CD8-positive, alpha-beta memory T cell (primary cell): ENCODE measurements at regions of chr17 and their contacts with region 1.

Region 1: DNA sequence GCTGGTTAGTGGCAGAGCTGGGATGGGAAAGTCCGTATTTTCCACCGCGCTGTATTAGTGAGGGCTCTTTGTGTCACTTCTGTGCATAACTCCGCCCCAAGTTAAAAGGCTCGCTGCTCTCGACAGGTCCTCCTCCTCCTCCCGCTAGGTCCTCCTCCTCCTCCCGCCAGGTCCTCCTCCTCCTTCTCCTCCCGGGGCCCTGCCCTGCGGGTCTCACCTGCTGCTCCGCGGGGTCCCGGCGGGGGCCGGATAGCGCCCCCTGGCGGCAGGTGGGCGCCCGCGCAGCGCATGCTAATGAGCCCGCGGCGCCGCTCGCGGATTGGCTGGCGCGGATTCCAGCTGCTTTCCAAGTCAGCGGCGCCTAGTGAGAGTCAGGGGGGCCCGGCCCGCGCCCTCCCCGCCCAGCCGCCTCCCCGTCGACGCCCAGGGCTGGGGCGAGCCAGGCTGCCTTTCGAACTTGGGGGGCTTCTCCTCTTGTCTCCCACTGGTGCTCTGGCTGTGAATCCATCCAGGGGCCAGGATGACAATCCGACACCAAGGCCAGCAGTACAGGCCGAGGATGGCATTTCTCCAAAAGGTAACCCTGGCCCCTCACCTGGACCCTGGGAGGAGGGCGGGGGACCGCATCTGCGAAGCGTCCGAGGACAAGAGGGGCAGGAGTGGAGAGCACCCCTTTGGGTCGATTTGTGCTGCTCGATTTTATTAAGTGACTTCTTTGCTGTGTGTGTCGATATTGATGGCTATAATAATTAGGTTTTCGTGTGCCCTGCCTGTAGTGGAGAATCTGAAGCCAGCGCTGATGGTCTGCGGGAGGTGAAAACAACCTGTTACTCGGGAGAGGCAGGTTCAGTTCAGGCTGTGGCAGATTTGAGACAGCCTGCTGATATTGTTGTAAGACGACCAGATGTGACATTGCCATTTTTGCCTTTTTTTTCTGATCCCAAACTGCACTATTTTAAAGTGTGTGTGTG is at the start of gene RGS9:
- DNase-seq: peak; percentile 84 to 91 (median 87)
- H3K4me3 ChIP-seq: peak within 1 kb of the TSS; percentile 67
- H3K4me3 Mint-ChIP-seq: peak within 1 kb of the TSS; percentile 73 to 90 (median 88)
- H3K27ac ChIP-seq: no peak within 1 kb of the TSS
- H3K27ac Mint-ChIP-seq: peak within 1 kb of the TSS; percentile 68 to 92 (median 84)
- H3K4me1 ChIP-seq: peaks cover 30% of the 10 kb centered on the region
- H3K4me1 Mint-ChIP-seq: peaks cover 38 to 44% (median 41%) of the 10 kb centered on the region in 3 donors
- H3K27me3 ChIP-seq: no peaks in the 10 kb centered on the region
- H3K27me3 Mint-ChIP-seq: peaks cover 1 to 18% of the 10 kb centered on the region in 2 donors
- total RNA-seq, gene RGS9: 1.4 to 2.6 TPM

Region 2: GRCh38 chr17:65074778-65075250 is 62.5 kb before region 1 on chr17:
- CTCF ChIA-PET with region 1: no interaction called
- POLR2A ChIA-PET with region 1: no interaction called
- DNase-seq: no peak
- H3K4me3 ChIP-seq: no peak overlapping the region
- H3K4me3 Mint-ChIP-seq: no peak overlapping the region
- H3K27ac ChIP-seq: no peak overlapping the region
- H3K27ac Mint-ChIP-seq: peak overlapping the region in 1 of 8 donors; percentile 29
- H3K4me1 ChIP-seq: no peaks in the 10 kb centered on the region
- H3K4me1 Mint-ChIP-seq: no peaks in the 10 kb centered on the region
- H3K27me3 ChIP-seq: no peaks in the 10 kb centered on the region
- H3K27me3 Mint-ChIP-seq: peaks cover 0 to 1% of the 10 kb centered on the region in 2 donors

Region 3: DNA sequence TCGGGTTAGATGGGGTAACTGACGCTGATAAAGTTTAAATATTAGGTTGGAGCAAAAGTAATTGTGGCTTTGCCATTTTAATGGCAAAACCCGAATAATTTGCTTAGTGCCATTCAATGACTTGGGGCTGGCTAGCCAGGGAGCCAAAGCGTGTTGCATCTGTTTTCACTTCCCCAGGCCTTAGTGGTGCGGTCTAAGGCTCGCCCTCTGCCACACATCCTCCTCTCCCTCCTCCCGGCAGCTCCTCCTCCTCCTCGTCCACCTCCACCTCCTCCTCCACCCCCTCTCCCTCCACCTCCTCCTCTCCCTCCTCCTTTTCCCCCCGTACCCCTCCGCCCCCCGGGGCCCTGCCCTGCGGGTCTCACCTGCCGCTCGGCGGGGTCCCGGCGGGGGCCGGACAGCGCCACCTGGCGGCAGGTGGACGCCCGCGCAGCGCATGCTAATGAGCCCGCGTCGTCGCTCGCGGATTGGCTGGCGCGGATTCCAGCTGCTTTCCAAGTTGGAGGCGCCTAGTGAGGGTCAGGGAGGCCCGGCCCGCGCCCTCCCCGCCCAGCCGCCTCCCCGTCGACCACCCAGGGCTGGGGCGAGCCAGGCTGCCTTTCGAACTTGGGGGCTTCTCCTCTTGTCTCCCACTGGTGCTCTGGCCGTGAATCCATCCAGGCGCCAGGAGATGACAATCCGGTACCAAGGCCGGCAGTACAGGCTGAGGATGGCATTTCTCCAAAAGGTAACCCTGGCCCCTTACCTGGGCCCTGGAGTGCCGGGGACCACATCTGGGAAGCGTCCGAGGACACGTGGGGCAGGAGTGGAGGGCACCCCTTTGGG is 36.8 kb before region 1 on chr17:
- CTCF ChIA-PET with region 1: interaction called, 23 read pairs
- POLR2A ChIA-PET with region 1: no interaction called
- DNase-seq: peak; percentile 79 to 88 (median 82)
- H3K4me3 ChIP-seq: peak overlapping the region; percentile 95
- H3K4me3 Mint-ChIP-seq: peak overlapping the region; percentile 87 to 92 (median 90)
- H3K27ac ChIP-seq: peak overlapping the region; percentile 70
- H3K27ac Mint-ChIP-seq: peak overlapping the region; percentile 75 to 96 (median 90)
- H3K4me1 ChIP-seq: peaks cover 11% of the 10 kb centered on the region
- H3K4me1 Mint-ChIP-seq: peaks cover 16 to 30% (median 21%) of the 10 kb centered on the region in 3 donors
- H3K27me3 ChIP-seq: no peaks in the 10 kb centered on the region
- H3K27me3 Mint-ChIP-seq: peaks cover 0 to under 1% of the 10 kb centered on the region in 2 donors

Region 4: GRCh38 chr17:65122836-65123756 is 14.2 kb before region 1 on chr17:
- CTCF ChIA-PET with region 1: interaction called, 14 read pairs
- POLR2A ChIA-PET with region 1: interaction called, 3 read pairs
- DNase-seq: peak; percentile 69 to 88 (median 83)
- H3K4me3 ChIP-seq: peak overlapping the region; percentile 68
- H3K4me3 Mint-ChIP-seq: peak overlapping the region; percentile 59 to 96 (median 92)
- H3K27ac ChIP-seq: peak overlapping the region; percentile 64
- H3K27ac Mint-ChIP-seq: peak overlapping the region; percentile 56 to 99 (median 98)
- H3K4me1 ChIP-seq: peaks cover 10% of the 10 kb centered on the region
- H3K4me1 Mint-ChIP-seq: peaks cover 21 to 34% (median 25%) of the 10 kb centered on the region in 3 donors
- H3K27me3 ChIP-seq: no peaks in the 10 kb centered on the region
- H3K27me3 Mint-ChIP-seq: peaks cover 0 to 13% of the 10 kb centered on the region in 2 donors

Region 5: DNA sequence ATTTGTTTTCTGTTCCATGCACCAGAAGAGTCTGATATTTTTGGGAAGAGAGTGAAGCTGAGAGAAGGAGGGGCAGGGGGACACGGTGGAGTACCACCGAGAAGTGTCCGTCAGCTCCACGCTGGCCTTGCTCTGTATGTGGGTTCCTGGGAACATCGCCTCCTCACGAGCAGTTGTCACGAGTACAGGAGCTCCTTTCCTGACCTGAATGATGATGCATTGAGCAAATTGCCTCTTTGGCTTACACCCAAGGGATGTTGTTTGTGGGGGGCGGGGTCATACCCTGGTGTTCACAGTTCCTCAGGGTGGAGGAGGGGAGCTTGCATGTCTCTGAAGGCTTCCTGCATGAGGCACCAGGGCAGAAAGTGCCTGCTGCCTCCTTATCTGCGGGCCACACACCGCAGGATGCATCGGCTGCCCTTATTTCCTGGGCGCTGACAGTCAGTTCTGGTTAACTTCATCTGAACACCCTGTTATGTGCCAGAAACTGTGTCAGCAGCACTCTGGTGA is 36.0 kb after region 1 on chr17:
- CTCF ChIA-PET with region 1: interaction called, 11 read pairs
- POLR2A ChIA-PET with region 1: no interaction called
- DNase-seq: peak; percentile 48 to 87 (median 66)
- H3K4me3 ChIP-seq: no peak overlapping the region
- H3K4me3 Mint-ChIP-seq: peak overlapping the region in 1 of 7 donors; percentile 42
- H3K27ac ChIP-seq: peak overlapping the region; percentile 13
- H3K27ac Mint-ChIP-seq: peak overlapping the region in 1 of 8 donors; percentile 3
- H3K4me1 ChIP-seq: peaks cover 45% of the 10 kb centered on the region
- H3K4me1 Mint-ChIP-seq: peaks cover 0 to 32% (median 10%) of the 10 kb centered on the region in 3 donors
- H3K27me3 ChIP-seq: no peaks in the 10 kb centered on the region
- H3K27me3 Mint-ChIP-seq: no peaks in the 10 kb centered on the region

Region 6: DNA sequence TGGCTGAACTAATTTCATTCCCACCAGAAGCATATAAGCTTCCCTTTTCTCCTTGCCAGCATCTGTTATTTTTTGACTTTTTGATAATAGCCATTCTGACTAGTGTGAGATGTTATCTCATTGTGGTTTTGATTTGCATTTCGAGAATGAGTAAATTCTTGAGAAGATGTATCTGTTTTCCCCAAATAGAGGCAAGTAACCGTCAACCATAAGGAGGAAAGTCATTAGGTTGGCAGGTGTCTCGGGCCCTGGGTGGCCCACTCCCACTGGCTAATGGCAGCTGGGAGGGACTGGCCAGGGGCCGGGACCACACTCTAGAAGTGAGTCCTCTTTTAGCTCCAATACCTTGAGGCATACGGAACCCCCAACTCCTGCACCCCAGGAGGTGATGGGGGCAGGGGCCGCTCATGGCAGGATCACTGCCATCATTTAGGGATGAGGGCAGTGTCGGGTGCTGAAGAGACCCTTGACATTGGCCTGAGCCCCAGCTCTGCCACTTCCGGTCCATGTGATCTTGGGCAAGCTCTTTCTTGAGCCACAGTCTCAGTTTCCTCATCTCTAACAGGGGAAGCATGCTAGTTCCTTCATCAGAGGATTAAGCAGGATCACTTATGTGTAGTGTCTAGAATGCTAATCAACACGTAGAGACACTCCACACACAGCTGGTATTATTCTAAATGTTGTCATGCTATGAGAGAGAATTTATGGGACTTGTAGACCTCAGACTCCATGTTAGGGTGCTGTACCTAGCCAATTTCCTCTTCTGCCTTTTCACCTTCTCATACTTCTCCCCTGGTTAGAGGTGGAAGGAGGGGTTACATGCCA is 44.1 kb after region 1 on chr17:
- CTCF ChIA-PET with region 1: interaction called, 23 read pairs
- POLR2A ChIA-PET with region 1: interaction called, 4 read pairs
- DNase-seq: no peak
- H3K4me3 ChIP-seq: no peak overlapping the region
- H3K4me3 Mint-ChIP-seq: peak overlapping the region in 6 of 7 donors; percentile 50 to 81 (median 68)
- H3K27ac ChIP-seq: no peak overlapping the region
- H3K27ac Mint-ChIP-seq: peak overlapping the region; percentile 71 to 98 (median 94)
- H3K4me1 ChIP-seq: peaks cover 46% of the 10 kb centered on the region
- H3K4me1 Mint-ChIP-seq: peaks cover 62 to 71% (median 62%) of the 10 kb centered on the region in 3 donors
- H3K27me3 ChIP-seq: no peaks in the 10 kb centered on the region
- H3K27me3 Mint-ChIP-seq: peaks cover 0 to 1% of the 10 kb centered on the region in 2 donors

Region 7: DNA sequence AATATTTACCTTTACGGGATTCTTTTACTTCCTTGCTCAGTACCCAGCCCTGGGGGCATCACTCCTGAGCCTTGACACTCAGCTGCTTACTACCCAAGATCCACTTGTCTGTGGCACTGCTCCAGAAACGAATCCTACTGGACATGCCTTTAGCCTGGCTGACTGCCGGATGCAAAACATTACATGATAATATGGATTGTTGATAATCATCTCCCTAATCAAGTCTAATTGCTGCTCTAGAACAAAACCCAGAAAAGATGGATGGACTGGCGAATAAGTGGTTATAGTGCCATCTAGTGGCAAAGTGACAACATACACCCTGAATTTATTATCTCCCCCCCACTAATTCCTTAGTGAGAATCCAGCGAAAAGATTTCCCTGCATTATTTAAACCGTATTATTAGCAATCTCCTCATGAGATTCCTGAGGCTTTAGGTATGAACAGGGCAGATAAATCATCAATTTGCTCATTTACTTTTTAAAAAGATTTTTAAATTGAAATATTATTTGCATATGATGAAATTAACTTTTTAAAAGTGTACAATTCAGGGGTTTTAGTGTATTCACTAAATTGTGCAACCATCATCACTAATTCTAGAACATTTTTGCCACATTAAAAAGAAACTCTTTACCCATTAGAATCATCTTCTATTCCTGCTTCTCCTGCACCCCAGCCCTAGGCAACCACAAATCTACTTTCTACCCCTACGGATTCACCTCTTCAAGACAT is 61.5 kb after region 1 on chr17:
- CTCF ChIA-PET with region 1: interaction called, 10 read pairs
- POLR2A ChIA-PET with region 1: no interaction called
- DNase-seq: peak in 2 of 5 donors; percentile 60 to 65
- H3K4me3 ChIP-seq: no peak overlapping the region
- H3K4me3 Mint-ChIP-seq: no peak overlapping the region
- H3K27ac ChIP-seq: no peak overlapping the region
- H3K27ac Mint-ChIP-seq: peak overlapping the region in 4 of 8 donors; percentile 1 to 70 (median 32)
- H3K4me1 ChIP-seq: no peaks in the 10 kb centered on the region
- H3K4me1 Mint-ChIP-seq: peaks cover 5 to 7% (median 6%) of the 10 kb centered on the region in 3 donors
- H3K27me3 ChIP-seq: no peaks in the 10 kb centered on the region
- H3K27me3 Mint-ChIP-seq: peaks cover 0 to 5% of the 10 kb centered on the region in 2 donors